Posterior vena cava (tissue), 2 donors: ENCODE measurements at regions of chr7 and their contacts with region 1.

Region 1: DNA sequence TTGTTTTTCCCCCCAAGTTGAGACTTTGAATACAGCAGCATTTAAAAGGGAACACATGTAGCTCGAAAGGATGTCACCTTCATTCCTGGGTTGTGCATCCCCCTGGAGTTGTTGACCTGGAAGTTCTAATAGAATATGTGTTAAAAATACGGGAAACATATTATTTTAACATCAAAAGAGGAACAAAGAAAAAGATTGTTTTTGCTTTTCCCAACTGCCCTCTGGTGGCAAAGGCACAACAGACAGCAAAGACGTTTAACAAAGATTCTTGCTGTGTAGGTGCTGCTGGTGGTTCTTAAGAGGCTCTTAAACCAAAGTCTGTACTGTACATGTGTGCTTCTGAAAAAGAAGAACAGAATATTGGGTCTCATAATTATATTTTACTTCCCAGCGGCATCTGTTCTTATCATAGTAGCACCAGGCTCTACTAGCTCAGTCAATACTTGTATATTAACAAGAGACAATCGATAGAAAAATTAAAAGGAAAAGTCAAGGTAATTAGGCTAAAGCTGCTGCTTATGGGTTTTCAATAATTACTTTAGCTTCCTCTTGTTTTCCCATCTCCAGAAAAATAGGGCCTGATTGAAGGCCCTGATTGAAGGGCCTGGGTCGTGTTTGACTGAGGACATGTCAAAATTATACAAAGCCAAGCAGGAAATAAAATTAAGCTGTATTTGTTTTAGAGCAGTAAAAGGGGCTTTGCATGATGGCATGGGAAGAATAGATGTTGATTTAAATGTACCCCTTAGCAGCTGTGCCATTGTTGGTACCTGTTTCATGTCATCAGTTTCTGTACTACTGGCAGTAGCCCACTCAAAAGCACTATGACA is 384.2 kb upstream of the LRGUK start:
- DNase-seq: no peak

Region 2: GRCh38 chr7:133723044-133723443 is 19.9 kb before region 1 on chr7:
- intact Hi-C with region 1: no loop called
- DNase-seq: no peak

Region 3: DNA sequence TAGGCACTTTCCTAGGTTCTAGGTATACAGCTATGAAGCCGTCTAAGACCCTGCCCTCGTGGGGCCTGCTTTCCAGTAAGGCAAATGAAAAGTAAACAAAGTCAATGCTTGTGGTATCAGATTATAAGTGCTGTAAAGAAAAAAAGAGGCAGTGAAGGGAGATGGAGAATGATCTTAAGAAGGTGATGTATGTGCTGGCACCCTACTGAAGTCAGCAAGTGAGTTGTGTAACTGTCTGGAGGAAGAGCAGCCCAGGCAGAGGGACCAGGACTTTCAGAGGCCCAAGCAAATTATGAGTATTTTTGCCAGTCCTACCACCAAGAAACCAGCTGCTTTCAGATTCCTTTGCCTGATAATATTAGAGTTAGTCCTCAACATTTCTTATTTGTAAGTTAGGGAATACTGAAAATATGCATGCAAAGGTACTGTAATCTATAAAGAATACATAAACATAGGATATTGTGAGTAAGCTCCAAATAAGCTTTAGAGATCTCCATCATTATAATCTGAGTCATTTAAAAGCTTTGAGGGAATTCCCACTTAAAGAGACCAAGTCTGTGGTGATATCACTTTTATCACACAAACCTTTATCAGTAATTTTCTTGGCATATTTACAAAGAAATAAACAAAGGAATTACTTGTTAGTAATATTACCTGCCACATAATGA is 55.0 kb after region 1 on chr7:
- intact Hi-C with region 1: loop called in 1 of 2 experiments (anchors 2 kb)
- DNase-seq: no peak

Region 4: DNA sequence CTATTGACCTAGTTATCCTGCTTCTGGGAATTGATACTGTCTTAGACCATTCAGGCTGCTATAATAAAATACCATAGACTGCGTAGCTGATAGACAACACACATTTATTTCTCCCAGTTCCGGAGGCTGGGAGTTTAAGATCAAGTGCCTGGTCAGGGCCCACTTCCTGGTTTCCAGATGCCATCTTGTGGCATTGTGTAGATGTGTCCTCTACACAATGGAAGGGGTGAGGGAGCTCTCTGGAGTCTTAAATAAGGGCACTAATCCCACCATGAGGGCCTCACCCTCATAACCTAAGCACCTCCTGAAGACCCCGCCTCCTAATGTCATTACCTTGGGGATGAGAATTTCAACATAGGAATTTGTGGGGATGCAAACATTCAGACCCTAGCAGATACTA is 511.4 kb after region 1 on chr7:
- intact Hi-C with region 1: no loop called
- DNase-seq: no peak